ENCODE measurements at regions of chr5 and their contacts with region 1.

Region 1: DNA sequence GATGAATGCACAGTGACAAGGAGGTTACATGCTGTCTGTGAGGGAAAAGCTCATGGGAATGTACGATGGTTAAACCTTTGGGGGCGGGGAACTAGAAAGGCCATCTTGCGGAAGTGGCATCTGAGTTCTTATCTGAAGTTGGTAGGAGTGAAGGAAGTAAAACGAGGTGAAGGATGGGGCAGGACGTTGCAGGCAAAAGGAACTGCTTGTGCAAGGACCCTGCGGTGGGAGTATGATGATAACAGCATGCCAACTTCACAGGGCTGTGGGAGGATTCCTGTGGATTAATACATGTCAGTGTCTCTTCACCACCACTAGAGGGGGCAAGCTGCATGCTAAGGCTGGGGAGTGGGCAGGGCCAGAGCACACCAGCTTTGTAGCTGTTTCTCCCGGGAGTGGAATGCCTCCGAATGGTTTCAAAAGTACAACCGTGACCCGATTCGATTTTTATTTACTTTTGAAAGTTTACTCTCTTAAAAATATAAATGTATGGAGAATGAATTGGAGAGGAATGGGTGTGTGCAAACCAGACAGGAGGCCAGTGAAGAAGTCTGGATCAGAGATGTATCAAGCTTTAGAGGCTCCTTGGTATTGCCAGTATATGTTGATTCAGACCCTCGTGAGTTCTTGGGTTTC is 62.5 kb downstream of the CYFIP2 start:
- DNase-seq: peak in 1 of 2 experiments; percentile 54
- H3K4me3 ChIP-seq: no peak overlapping the region
- H3K27ac ChIP-seq: no peak overlapping the region
- H3K4me1 ChIP-seq: no peaks in the 10 kb centered on the region
- H3K27me3 ChIP-seq: no peaks in the 10 kb centered on the region
- CTCF ChIP-seq: peak; percentile 86 to 94 (median 89)
- EP300 ChIP-seq: no peak
- POLR2A ChIP-seq: no peak
- RAD21 ChIP-seq: peak; percentile 67 to 74

Region 2: GRCh38 chr5:157253547-157253946 is 74.8 kb before region 1 on chr5:
- CTCF ChIA-PET with region 1: interaction called, 39 read pairs
- POLR2A ChIA-PET with region 1: no interaction called
- DNase-seq: peak in 1 of 2 experiments; percentile 83
- H3K4me3 ChIP-seq: no peak overlapping the region
- H3K27ac ChIP-seq: no peak overlapping the region
- H3K4me1 ChIP-seq: no peaks in the 10 kb centered on the region
- H3K27me3 ChIP-seq: no peaks in the 10 kb centered on the region
- CTCF ChIP-seq: peak; percentile 69 to 90 (median 85)
- EP300 ChIP-seq: no peak
- POLR2A ChIP-seq: no peak
- RAD21 ChIP-seq: peak; percentile 83 to 90

Region 3: DNA sequence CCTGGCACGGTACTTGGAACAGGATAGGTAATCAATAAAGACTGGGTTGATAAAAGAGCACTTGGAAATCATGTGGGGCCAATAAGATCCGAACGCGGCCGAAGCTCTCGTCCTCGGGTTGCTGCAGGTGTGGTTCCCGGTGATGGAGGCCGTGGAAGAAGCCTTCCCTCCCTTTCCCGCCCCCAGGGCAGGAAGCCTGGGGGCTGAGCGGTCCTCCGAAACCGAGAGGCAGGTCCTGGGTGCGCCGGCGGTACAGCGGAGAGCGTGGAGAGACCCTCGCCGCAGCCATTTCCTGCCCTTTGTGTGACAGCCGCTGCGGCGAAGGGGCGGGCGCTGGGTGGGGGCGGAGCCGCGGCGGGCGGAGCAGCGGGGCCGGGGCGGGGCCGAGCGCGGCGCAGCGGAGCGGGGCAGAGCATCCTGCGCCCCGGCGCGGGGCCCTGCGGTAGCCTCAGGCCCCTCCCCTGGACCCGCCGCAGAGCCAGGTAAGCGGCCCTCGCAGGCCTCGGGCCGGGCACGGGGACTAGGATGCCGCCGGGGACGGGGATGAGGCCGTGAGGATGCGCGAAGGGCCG is 62.6 kb before region 1 on chr5 and contains the start of gene CYFIP2:
- CTCF ChIA-PET with region 1: interaction called, 11 read pairs
- POLR2A ChIA-PET with region 1: no interaction called
- DNase-seq: no peak
- H3K4me3 ChIP-seq: peak within 1 kb of the TSS; percentile 59 to 82 (median 68)
- H3K27ac ChIP-seq: peak within 1 kb of the TSS; percentile 60; the same call in 1 of the 2 replicates
- H3K4me1 ChIP-seq: peaks cover 8 to 19% (median 13%) of the 10 kb centered on the region in 4 experiments
- H3K27me3 ChIP-seq: no peaks in the 10 kb centered on the region; a peak in 2 of 7 replicates
- CTCF ChIP-seq: no peak
- EP300 ChIP-seq: no peak
- POLR2A ChIP-seq: peak in 1 of 2 experiments; percentile 73; a peak in 2 of 3 replicates
- RAD21 ChIP-seq: no peak
- total RNA-seq, gene CYFIP2: 80.6 and 85.3 TPM in 2 replicates

Region 4: GRCh38 chr5:157312492-157312891 is 15.9 kb before region 1 on chr5:
- CTCF ChIA-PET with region 1: interaction called, 157 read pairs
- POLR2A ChIA-PET with region 1: interaction called, 4 read pairs
- DNase-seq: no peak
- H3K4me3 ChIP-seq: no peak overlapping the region
- H3K27ac ChIP-seq: no peak overlapping the region
- H3K4me1 ChIP-seq: no peaks in the 10 kb centered on the region; a peak in 1 of 7 replicates
- H3K27me3 ChIP-seq: no peaks in the 10 kb centered on the region
- CTCF ChIP-seq: peak; percentile 67 to 75 (median 71)
- EP300 ChIP-seq: no peak
- POLR2A ChIP-seq: no peak
- RAD21 ChIP-seq: peak; percentile 52 to 53

Region 5: GRCh38 chr5:157342822-157343402 is 14.5 kb after region 1 on chr5:
- CTCF ChIA-PET with region 1: interaction called, 118 read pairs
- POLR2A ChIA-PET with region 1: no interaction called
- DNase-seq: peak in 1 of 2 experiments; percentile 82
- H3K4me3 ChIP-seq: no peak overlapping the region
- H3K27ac ChIP-seq: no peak overlapping the region
- H3K4me1 ChIP-seq: no peaks in the 10 kb centered on the region
- H3K27me3 ChIP-seq: no peaks in the 10 kb centered on the region
- CTCF ChIP-seq: peak; percentile 69 to 77 (median 72)
- EP300 ChIP-seq: no peak
- POLR2A ChIP-seq: no peak
- RAD21 ChIP-seq: peak; percentile 29 to 52; a peak in 3 of 4 replicates

Region 6: GRCh38 chr5:157354800-157355199 is 26.4 kb after region 1 on chr5:
- CTCF ChIA-PET with region 1: interaction called, 118 read pairs
- POLR2A ChIA-PET with region 1: no interaction called
- DNase-seq: peak in 1 of 2 experiments; percentile 62
- H3K4me3 ChIP-seq: no peak overlapping the region
- H3K27ac ChIP-seq: no peak overlapping the region
- H3K4me1 ChIP-seq: no peaks in the 10 kb centered on the region
- H3K27me3 ChIP-seq: no peaks in the 10 kb centered on the region
- CTCF ChIP-seq: peak; percentile 52 to 79 (median 58)
- EP300 ChIP-seq: no peak
- POLR2A ChIP-seq: no peak
- RAD21 ChIP-seq: peak; percentile 19 to 43; a peak in 2 of 4 replicates

Region 7: DNA sequence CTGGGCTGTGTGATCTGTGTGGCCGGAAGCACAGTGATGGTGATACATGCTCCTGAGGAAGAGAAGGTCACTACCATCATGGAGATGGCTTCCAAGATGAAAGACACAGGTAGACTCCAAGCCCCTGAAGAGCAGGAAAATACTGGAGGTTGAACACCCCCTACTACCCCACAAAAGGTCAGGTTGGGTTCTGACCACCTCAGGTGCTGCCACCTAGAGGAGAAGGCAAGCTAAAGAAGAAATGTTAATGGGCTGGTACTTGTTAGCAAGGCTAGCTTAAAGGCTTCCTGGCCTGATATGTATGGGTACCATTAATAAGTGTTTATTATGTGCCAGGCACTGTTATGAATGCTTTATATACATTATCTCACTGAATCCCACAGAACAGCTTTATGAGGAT is 143.3 kb after region 1 on chr5:
- CTCF ChIA-PET with region 1: interaction called, 15 read pairs
- POLR2A ChIA-PET with region 1: no interaction called
- DNase-seq: no peak
- H3K4me3 ChIP-seq: no peak overlapping the region
- H3K27ac ChIP-seq: no peak overlapping the region
- H3K4me1 ChIP-seq: no peaks in the 10 kb centered on the region
- H3K27me3 ChIP-seq: no peaks in the 10 kb centered on the region
- CTCF ChIP-seq: peak; percentile 40 to 76 (median 74)
- EP300 ChIP-seq: no peak
- POLR2A ChIP-seq: no peak
- RAD21 ChIP-seq: peak; percentile 55 to 71

Region 8: DNA sequence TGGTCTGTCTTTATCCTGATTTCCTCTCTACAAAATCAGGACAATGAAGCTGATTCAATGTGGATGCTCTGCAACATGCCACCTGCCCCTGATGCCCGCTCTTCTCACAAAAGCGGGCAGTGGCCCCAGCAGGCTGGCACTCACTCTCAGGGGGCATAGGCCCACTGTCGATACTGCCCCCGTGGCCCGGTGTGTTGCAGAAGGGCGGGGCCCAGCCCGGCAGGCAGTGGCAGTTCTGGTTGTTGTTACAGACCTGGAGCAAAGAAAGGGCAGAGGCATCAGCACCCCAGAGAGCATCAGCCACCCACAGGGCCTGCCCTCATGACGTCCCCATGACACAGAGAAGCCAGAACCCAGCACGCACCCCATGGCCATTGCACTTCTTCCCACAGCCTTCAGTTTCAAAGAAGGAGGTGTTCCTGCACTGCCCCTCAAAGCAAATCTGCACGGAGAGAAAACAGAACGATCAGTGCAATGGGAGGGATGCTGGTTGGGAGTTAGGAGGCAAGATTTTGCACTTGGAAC is 163.1 kb after region 1 on chr5:
- CTCF ChIA-PET with region 1: no interaction called
- POLR2A ChIA-PET with region 1: no interaction called
- DNase-seq: no peak
- H3K4me3 ChIP-seq: no peak overlapping the region
- H3K27ac ChIP-seq: no peak overlapping the region
- H3K4me1 ChIP-seq: no peaks in the 10 kb centered on the region
- H3K27me3 ChIP-seq: no peaks in the 10 kb centered on the region
- CTCF ChIP-seq: no peak
- EP300 ChIP-seq: no peak
- POLR2A ChIP-seq: no peak
- RAD21 ChIP-seq: no peak

Region 9: GRCh38 chr5:157592594-157592993 is 264.2 kb after region 1 on chr5:
- CTCF ChIA-PET with region 1: no interaction called
- POLR2A ChIA-PET with region 1: no interaction called
- DNase-seq: no peak
- H3K4me3 ChIP-seq: no peak overlapping the region
- H3K27ac ChIP-seq: no peak overlapping the region
- H3K4me1 ChIP-seq: no peaks in the 10 kb centered on the region
- H3K27me3 ChIP-seq: no peaks in the 10 kb centered on the region
- CTCF ChIP-seq: no peak
- EP300 ChIP-seq: no peak
- POLR2A ChIP-seq: no peak
- RAD21 ChIP-seq: no peak

Measured in H1 (cell line).